ENCODE measurements at regions of chr11 and their contacts with region 1.

Region 1: GRCh38 chr11:842370-843002 is at the starts of genes POLR2L and TSPAN4:
- DNase-seq: no peak
- ATAC-seq: peak; percentile 76
- H3K4me3 ChIP-seq: peak within 1 kb of the TSS; percentile 96
- H3K27ac ChIP-seq: peak within 1 kb of the TSS; percentile 90
- H3K4me1 ChIP-seq: peaks cover 15% of the 10 kb centered on the region
- H3K27me3 ChIP-seq: no peaks in the 10 kb centered on the region
- CTCF ChIP-seq: no peak
- EP300 ChIP-seq: 0 out of 4 replicates have a peak, but pooled peaks of 1 of the 2 experiments have one; percentile 10
- POLR2A ChIP-seq: peak; percentile 100
- RAD21 ChIP-seq: no peak
- polyA plus RNA-seq, gene POLR2L: 68.8 to 117 TPM
- polyA plus RNA-seq, gene TSPAN4: 0.37 TPM in 1 of 2 experiments, not detected in the other

Region 2: DNA sequence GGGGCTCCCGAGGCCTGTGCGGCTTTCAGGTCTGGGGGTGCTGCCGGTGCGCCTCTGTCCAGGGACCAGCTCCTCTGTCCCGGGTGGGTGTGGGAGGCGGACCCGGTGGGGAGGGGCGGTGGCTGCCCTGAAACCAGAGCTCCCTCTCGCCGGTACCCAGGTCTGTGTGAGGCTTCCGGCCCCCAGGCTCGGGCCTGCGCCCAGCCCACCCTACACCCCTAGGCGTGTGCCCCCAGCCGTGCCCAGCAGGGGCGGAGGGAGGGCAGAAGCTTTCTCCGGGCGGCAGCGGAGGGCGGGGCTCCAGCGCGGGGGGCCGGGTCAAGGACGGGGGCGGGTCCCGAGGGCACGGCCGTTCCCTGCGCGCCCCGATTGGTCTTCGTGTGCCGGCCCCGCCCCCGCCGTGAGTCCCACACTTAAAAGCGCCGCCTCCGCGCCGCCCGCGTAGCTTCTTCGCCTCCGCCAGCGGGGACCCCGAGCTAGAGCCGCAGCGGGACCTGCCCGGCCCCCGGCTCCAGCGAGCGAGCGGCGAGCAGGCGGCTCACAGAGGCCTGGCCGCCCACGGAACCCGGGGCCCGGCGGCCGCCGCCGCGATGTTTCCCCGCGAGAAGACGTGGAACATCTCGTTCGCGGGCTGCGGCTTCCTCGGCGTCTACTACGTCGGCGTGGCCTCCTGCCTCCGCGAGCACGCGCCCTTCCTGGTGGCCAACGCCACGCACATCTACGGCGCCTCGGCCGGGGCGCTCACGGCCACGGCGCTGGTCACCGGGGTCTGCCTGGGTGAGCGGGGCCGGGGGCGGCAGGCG is 23.2 kb before region 1 on chr11:
- CTCF ChIA-PET with region 1: interaction called, 4 read pairs
- POLR2A ChIA-PET with region 1: interaction called, 12 read pairs
- RAD21 ChIA-PET with region 1: interaction called, 5 read pairs
- SMC1A ChIA-PET with region 1: interaction called, 5 read pairs
- in situ Hi-C with region 1: no loop called
- intact Hi-C with region 1: no loop called
- DNase-seq: no peak
- ATAC-seq: peak; percentile 88
- H3K4me3 ChIP-seq: peak overlapping the region; percentile 82
- H3K27ac ChIP-seq: peak overlapping the region; percentile 73
- H3K4me1 ChIP-seq: no peaks in the 10 kb centered on the region; the same call in 1 of the 2 replicates
- H3K27me3 ChIP-seq: no peaks in the 10 kb centered on the region
- CTCF ChIP-seq: peak in 1 of 3 experiments; percentile 26; a peak in 1 of 6 replicates
- EP300 ChIP-seq: no peak
- POLR2A ChIP-seq: peak; percentile 92
- RAD21 ChIP-seq: no peak

Region 3: GRCh38 chr11:830295-831117 is 12.0 kb before region 1 on chr11:
- CTCF ChIA-PET with region 1: no interaction called
- POLR2A ChIA-PET with region 1: interaction called, 21 read pairs
- RAD21 ChIA-PET with region 1: interaction called, 9 read pairs
- SMC1A ChIA-PET with region 1: interaction called, 3 read pairs
- in situ Hi-C with region 1: no loop called
- intact Hi-C with region 1: no loop called
- DNase-seq: no peak
- ATAC-seq: peak; percentile 72
- H3K4me3 ChIP-seq: peak overlapping the region; percentile 49
- H3K27ac ChIP-seq: no peak overlapping the region
- H3K4me1 ChIP-seq: peaks cover 42% of the 10 kb centered on the region
- H3K27me3 ChIP-seq: no peaks in the 10 kb centered on the region; a peak in 3 of 4 replicates
- CTCF ChIP-seq: no peak
- EP300 ChIP-seq: no peak
- POLR2A ChIP-seq: no peak
- RAD21 ChIP-seq: no peak

Region 4: GRCh38 chr11:910589-911195 is 68.2 kb after region 1 on chr11 and contains the start of gene CHID1:
- CTCF ChIA-PET with region 1: no interaction called
- POLR2A ChIA-PET with region 1: no interaction called
- RAD21 ChIA-PET with region 1: no interaction called
- SMC1A ChIA-PET with region 1: no interaction called
- in situ Hi-C with region 1: no loop called
- intact Hi-C with region 1: loop called (anchors 5 kb)
- DNase-seq: no peak
- ATAC-seq: peak; percentile 96
- H3K4me3 ChIP-seq: peak within 1 kb of the TSS; percentile 100
- H3K27ac ChIP-seq: peak within 1 kb of the TSS; percentile 70
- H3K4me1 ChIP-seq: peaks cover 23% of the 10 kb centered on the region
- H3K27me3 ChIP-seq: no peaks in the 10 kb centered on the region
- CTCF ChIP-seq: no peak; a peak in 1 of 6 replicates
- EP300 ChIP-seq: no peak
- POLR2A ChIP-seq: peak; percentile 84
- RAD21 ChIP-seq: no peak
- polyA plus RNA-seq, gene CHID1: 4.8 to 10.1 TPM

Region 5: DNA sequence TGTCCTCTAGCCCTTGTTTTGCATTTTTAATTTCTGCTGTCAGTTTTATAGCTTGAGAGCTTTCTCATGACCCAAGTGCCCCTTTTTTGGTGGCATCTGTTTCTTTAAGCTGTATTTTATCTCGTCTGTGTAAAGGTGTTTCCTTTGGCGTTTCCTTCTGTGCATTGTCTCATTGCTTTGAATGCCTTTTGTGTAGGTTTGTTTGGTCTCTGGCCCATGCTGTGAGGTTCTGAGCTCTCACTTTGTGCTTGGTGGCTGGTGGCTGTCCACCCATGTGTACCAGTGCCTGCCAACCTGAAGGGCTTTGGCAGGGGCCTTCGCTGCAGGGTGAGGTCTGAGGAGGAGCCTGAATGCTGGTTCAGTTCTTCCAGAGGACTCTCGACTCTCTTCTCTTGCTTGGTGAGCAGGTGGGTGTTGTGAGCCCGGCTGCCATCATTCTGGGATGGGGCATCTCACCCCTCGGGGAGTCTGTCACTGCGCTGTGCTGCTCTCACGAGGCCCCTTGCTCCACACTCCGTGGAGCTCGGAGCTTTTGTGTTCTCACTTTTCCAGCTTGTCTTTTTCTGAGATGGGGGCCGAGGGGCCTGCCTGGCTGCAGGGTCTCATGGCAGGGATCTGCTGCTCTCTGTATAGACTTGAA is 98.1 kb after region 1 on chr11:
- CTCF ChIA-PET with region 1: no interaction called
- POLR2A ChIA-PET with region 1: no interaction called
- RAD21 ChIA-PET with region 1: no interaction called
- SMC1A ChIA-PET with region 1: no interaction called
- in situ Hi-C with region 1: no loop called
- intact Hi-C with region 1: no loop called
- DNase-seq: no peak
- ATAC-seq: no peak
- H3K4me3 ChIP-seq: no peak overlapping the region
- H3K27ac ChIP-seq: no peak overlapping the region
- H3K4me1 ChIP-seq: no peaks in the 10 kb centered on the region
- H3K27me3 ChIP-seq: no peaks in the 10 kb centered on the region
- CTCF ChIP-seq: no peak
- EP300 ChIP-seq: no peak
- POLR2A ChIP-seq: no peak
- RAD21 ChIP-seq: no peak

Region 6: GRCh38 chr11:1050581-1051355 is 208.3 kb after region 1 on chr11:
- CTCF ChIA-PET with region 1: interaction called, 23 read pairs
- POLR2A ChIA-PET with region 1: no interaction called
- RAD21 ChIA-PET with region 1: interaction called, 3 read pairs
- SMC1A ChIA-PET with region 1: no interaction called
- in situ Hi-C with region 1: loop called (anchors 10 kb)
- intact Hi-C with region 1: no loop called
- DNase-seq: no peak
- ATAC-seq: peak; percentile 100
- H3K4me3 ChIP-seq: no peak overlapping the region
- H3K27ac ChIP-seq: no peak overlapping the region
- H3K4me1 ChIP-seq: no peaks in the 10 kb centered on the region
- H3K27me3 ChIP-seq: no peaks in the 10 kb centered on the region
- CTCF ChIP-seq: peak; percentile 89 to 97 (median 94)
- EP300 ChIP-seq: no peak
- POLR2A ChIP-seq: no peak
- RAD21 ChIP-seq: peak; percentile 89

Region 7: GRCh38 chr11:1852877-1853276 is 1010.4 kb after region 1 on chr11 and contains the start of gene LSP1:
- CTCF ChIA-PET with region 1: no interaction called
- POLR2A ChIA-PET with region 1: no interaction called
- RAD21 ChIA-PET with region 1: no interaction called
- SMC1A ChIA-PET with region 1: no interaction called
- in situ Hi-C with region 1: loop called (anchors 10 kb)
- intact Hi-C with region 1: no loop called
- DNase-seq: peak; percentile 92
- ATAC-seq: peak; percentile 57
- H3K4me3 ChIP-seq: peak within 1 kb of the TSS; percentile 96
- H3K27ac ChIP-seq: peak within 1 kb of the TSS; percentile 99
- H3K4me1 ChIP-seq: peaks cover 60% of the 10 kb centered on the region
- H3K27me3 ChIP-seq: no peaks in the 10 kb centered on the region
- CTCF ChIP-seq: no peak
- EP300 ChIP-seq: peak; percentile 97 to 98
- POLR2A ChIP-seq: peak; percentile 89
- RAD21 ChIP-seq: peak; percentile 43; the same call in 1 of the 2 replicates
- polyA plus RNA-seq, gene LSP1: 19.2 to 34.2 TPM